ENCODE measurements at regions of chr3 and their contacts with region 1.

Region 1: GRCh38 chr3:186901135-186901734 is 29.1 kb upstream of the ST6GAL1 start:
- DNase-seq: peak in 4 of 9 donors; percentile 17 to 33 (median 30)
- ATAC-seq: peak; percentile 36
- H3K4me3 ChIP-seq: no peak overlapping the region
- H3K4me3 Mint-ChIP-seq: peak overlapping the region in 7 of 10 donors; percentile 6 to 61 (median 34)
- H3K27ac ChIP-seq: no peak overlapping the region
- H3K27ac Mint-ChIP-seq: peak overlapping the region; percentile 69 to 91 (median 83)
- H3K4me1 ChIP-seq: peaks cover 8 to 11% of the 10 kb centered on the region in 2 donors
- H3K4me1 Mint-ChIP-seq: peaks cover 5 to 39% (median 25%) of the 10 kb centered on the region in 7 donors
- H3K27me3 ChIP-seq: no peaks in the 10 kb centered on the region
- H3K27me3 Mint-ChIP-seq: no peaks in the 10 kb centered on the region

Region 2: GRCh38 chr3:186589856-186590579 is 311.2 kb before region 1 on chr3:
- CTCF ChIA-PET with region 1: no interaction called
- POLR2A ChIA-PET with region 1: no interaction called
- intact Hi-C with region 1: no loop called
- DNase-seq: peak in 1 of 9 donors; percentile 18
- ATAC-seq: peak; percentile 71
- H3K4me3 ChIP-seq: no peak overlapping the region
- H3K4me3 Mint-ChIP-seq: no peak overlapping the region
- H3K27ac ChIP-seq: no peak overlapping the region
- H3K27ac Mint-ChIP-seq: peak overlapping the region in 3 of 9 donors; percentile 67 to 80 (median 69)
- H3K4me1 ChIP-seq: no peaks in the 10 kb centered on the region
- H3K4me1 Mint-ChIP-seq: peaks cover 5 to 23% (median 8%) of the 10 kb centered on the region in 7 donors
- H3K27me3 ChIP-seq: no peaks in the 10 kb centered on the region
- H3K27me3 Mint-ChIP-seq: no peaks in the 10 kb centered on the region

Region 3: DNA sequence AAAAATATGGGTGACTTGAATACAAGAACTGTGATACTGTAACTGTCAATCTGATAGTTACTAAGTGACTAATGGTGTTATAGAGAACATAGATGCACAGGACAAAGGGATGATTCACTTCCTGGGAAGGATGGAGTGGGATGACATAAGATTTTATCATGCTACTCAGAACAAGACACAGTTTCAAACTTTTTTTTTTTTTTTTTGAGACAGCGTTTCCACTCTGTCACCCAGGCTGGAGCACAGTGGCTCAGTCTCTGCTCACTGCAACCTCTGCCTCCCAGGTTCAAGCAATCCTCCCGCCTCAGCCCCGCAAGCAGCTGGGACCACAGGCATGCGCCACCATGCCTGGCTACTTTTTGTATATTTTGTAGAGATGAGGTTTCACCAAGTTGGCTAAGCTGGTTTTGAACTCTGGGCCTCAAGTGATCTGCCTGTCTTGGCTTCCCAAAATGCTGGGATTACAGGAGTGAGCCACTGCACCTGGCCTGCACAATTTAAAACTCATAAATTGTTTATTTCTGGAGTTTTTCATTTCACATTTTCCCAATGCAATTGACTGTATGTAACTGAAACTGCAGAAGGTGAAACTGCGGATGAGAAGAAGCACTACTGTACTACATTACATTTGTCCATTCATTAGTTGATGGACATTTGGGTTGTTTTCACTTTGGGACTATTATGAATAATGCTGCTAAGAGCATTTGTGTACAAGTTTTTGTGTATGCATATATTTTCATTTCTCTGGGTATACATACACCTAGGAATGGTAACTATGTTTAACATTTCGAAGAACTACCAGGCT is 18.2 kb before region 1 on chr3:
- CTCF ChIA-PET with region 1: interaction called, 4 read pairs
- POLR2A ChIA-PET with region 1: interaction called, 3 read pairs
- intact Hi-C with region 1: loop called in 1 of 2 experiments (anchors 2 kb)
- DNase-seq: peak in 1 of 9 donors; percentile 64
- ATAC-seq: peak; percentile 45
- H3K4me3 ChIP-seq: no peak overlapping the region
- H3K4me3 Mint-ChIP-seq: peak overlapping the region in 2 of 10 donors; percentile 37 to 49
- H3K27ac ChIP-seq: no peak overlapping the region
- H3K27ac Mint-ChIP-seq: peak overlapping the region in 3 of 9 donors; percentile 47 to 64 (median 54)
- H3K4me1 ChIP-seq: peaks cover 13 to 25% of the 10 kb centered on the region in 2 donors
- H3K4me1 Mint-ChIP-seq: peaks cover 15 to 50% (median 41%) of the 10 kb centered on the region in 7 donors
- H3K27me3 ChIP-seq: no peaks in the 10 kb centered on the region
- H3K27me3 Mint-ChIP-seq: peaks cover 0 to 2% (median 0%) of the 10 kb centered on the region in 5 donors

Region 4: DNA sequence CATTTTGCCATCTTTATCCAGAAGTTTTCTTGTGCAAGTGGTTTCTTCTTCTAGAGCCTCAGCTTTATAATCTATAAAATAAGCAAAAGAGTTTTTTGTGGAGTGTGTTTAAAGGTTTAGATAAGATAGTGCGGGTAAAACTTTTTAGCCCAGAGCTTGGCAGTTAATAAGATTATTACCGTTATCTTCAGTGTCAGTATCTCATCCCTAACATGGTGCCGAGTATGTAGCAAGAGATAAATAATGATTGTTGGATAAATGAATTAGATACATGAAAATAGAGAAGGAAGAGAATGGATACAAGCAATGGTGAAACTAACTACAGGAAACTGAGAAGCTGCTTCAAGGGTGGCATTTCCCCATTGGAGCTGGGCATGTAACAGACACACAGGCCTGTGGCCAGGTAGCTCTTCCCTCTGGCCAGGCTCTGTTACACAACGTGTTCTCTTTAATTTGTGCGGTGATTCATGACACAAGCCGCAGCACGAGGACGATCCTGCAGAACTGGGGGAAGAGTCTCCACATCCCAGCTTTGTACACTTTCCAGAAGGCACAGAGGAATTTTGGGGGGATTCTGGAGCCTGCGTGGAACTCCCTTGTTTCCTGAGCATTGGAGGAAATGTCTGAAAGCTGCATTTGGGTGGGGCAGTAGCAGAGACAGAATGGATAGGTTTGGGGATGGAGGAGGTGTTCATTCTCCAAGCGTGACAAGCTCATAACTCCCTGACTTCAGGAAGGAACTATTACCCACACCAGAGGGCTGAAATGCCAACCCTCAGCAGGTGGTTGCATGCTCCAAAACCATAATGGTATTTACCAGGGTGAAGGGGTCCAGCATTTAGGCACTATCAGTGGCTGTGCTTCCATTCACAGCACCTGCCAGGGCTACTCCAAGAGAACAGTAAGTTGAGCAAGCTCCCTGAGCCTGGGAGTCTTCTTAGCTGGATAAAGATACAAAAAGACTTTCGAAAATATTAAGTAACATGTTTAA is 14.9 kb after region 1 on chr3:
- CTCF ChIA-PET with region 1: no interaction called
- POLR2A ChIA-PET with region 1: interaction called, 11 read pairs
- intact Hi-C with region 1: loop called in 1 of 2 experiments (anchors 2 kb)
- DNase-seq: no peak
- ATAC-seq: peak; percentile 36
- H3K4me3 ChIP-seq: peak overlapping the region; percentile 9
- H3K4me3 Mint-ChIP-seq: peak overlapping the region in 7 of 10 donors; percentile 4 to 66 (median 41)
- H3K27ac ChIP-seq: no peak overlapping the region
- H3K27ac Mint-ChIP-seq: peak overlapping the region in 6 of 9 donors; percentile 36 to 81 (median 46)
- H3K4me1 ChIP-seq: peaks cover 9 to 24% of the 10 kb centered on the region in 2 donors
- H3K4me1 Mint-ChIP-seq: peaks cover 22 to 68% (median 56%) of the 10 kb centered on the region in 7 donors
- H3K27me3 ChIP-seq: no peaks in the 10 kb centered on the region
- H3K27me3 Mint-ChIP-seq: peaks cover 0 to 3% (median 0%) of the 10 kb centered on the region in 5 donors

Measured in naive thymus-derived CD4-positive, alpha-beta T cell (primary cell).